ENCODE measurements at regions of chr11 and their contacts with region 1.

Region 1: GRCh38 chr11:133082851-133083488 is 449.3 kb downstream of the OPCML start:
- DNase-seq: peak; percentile 86
- ATAC-seq: peak; percentile 78
- H3K4me3 Mint-ChIP-seq: peak overlapping the region; percentile 71
- H3K27ac Mint-ChIP-seq: no peak overlapping the region
- H3K4me1 Mint-ChIP-seq: peaks cover 31% of the 10 kb centered on the region
- H3K27me3 Mint-ChIP-seq: peaks cover 22% of the 10 kb centered on the region
- CTCF ChIP-seq: peak; percentile 98

Region 2: GRCh38 chr11:132831272-132831671 is 251.7 kb before region 1 on chr11:
- CTCF ChIA-PET with region 1: no interaction called
- POLR2A ChIA-PET with region 1: no interaction called
- DNase-seq: no peak
- ATAC-seq: no peak
- H3K4me3 Mint-ChIP-seq: no peak overlapping the region
- H3K27ac Mint-ChIP-seq: no peak overlapping the region
- H3K4me1 Mint-ChIP-seq: no peaks in the 10 kb centered on the region
- H3K27me3 Mint-ChIP-seq: no peaks in the 10 kb centered on the region
- CTCF ChIP-seq: no peak

Region 3: DNA sequence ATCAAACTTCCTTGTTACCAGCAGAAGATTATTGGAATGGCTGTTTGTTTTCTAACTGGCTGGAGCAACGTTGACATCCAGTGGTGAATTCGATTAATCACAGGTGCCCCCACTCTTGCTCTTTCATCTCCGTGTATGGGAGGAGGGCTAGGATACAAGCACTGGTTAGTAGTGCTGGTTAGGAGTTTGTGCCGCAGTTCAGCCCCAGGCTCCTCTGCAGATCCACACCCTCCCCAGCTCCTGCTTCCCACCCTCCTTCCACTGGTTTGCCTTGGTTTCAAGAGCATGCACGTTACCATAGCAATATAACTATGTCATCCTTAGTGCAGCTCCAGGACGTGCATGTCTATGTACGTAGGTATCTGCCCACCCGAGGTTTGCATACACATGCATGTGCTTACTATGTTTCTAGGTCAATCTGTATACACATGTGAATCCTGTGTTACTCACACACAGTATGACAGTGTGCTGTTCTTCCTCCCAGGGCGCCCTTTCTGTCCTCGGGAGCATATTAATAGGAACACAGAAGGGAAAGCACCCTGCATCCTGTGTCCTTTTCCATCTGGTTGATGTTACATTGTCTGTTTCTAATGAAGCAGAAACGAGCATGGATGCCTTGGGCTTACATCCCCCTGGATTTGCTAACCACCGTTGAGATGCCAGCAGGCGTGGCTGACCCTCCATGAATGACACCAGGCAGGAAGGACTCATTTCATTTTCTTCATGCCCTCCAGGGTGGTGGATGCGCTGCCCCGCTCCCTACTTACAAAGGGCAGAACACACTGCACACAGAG is 89.9 kb before region 1 on chr11:
- CTCF ChIA-PET with region 1: no interaction called
- POLR2A ChIA-PET with region 1: no interaction called
- DNase-seq: no peak
- ATAC-seq: peak; percentile 78
- H3K4me3 Mint-ChIP-seq: peak overlapping the region; percentile 63
- H3K27ac Mint-ChIP-seq: no peak overlapping the region
- H3K4me1 Mint-ChIP-seq: peaks cover 17% of the 10 kb centered on the region
- H3K27me3 Mint-ChIP-seq: peaks cover 55% of the 10 kb centered on the region
- CTCF ChIP-seq: no peak

Region 4: DNA sequence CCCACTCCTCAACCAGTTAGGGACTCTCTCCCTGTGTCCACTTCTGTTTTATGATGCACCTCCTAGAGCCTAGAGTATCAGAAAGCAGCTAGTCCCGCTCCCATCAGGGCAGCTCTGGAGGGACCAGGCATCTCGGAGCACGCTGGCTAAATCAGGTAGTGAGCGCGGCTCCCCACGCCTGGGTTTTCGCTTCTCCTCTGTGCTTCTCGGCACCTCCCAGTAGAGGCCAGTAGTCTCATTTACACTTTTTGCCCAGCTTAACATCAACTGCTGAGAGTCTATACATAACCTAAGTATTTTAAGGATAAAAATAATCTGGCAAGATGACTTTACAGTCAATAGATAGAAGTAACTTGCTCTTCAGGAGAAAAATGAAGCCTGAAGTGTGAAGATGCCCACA is 24.5 kb before region 1 on chr11:
- CTCF ChIA-PET with region 1: interaction called, 17 read pairs
- POLR2A ChIA-PET with region 1: no interaction called
- DNase-seq: peak; percentile 35
- ATAC-seq: peak; percentile 93
- H3K4me3 Mint-ChIP-seq: no peak overlapping the region
- H3K27ac Mint-ChIP-seq: no peak overlapping the region
- H3K4me1 Mint-ChIP-seq: peaks cover under 1% of the 10 kb centered on the region; the same call in 1 of the 2 replicates
- H3K27me3 Mint-ChIP-seq: peaks cover 8% of the 10 kb centered on the region
- CTCF ChIP-seq: no peak

Region 5: DNA sequence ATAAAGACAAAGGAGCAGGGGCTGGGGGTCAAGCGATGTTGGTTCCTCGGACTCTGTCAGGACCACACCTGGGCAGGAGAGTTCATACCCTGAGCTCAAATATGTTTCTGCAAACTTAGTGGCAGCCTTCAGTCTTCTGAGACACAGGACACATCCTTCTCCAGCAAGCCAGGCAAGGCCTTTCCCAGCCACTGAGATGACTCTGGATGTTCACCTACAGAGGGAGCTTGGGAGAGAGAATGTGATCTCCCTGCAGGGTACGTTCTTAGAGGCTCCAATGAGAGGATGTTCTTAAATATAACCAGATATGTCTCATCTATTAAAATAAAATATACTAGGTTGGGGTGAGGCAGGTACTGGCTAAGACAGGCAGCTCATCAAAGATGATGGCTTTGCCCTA is 12.2 kb before region 1 on chr11:
- CTCF ChIA-PET with region 1: interaction called, 23 read pairs
- POLR2A ChIA-PET with region 1: no interaction called
- DNase-seq: no peak
- ATAC-seq: peak; percentile 70
- H3K4me3 Mint-ChIP-seq: peak overlapping the region; percentile 15; the same call in 1 of the 2 replicates
- H3K27ac Mint-ChIP-seq: no peak overlapping the region
- H3K4me1 Mint-ChIP-seq: peaks cover 37% of the 10 kb centered on the region
- H3K27me3 Mint-ChIP-seq: no peaks in the 10 kb centered on the region; the same call in 1 of the 2 replicates
- CTCF ChIP-seq: no peak

Region 6: GRCh38 chr11:133156986-133157745 is 74.2 kb after region 1 on chr11:
- CTCF ChIA-PET with region 1: interaction called, 46 read pairs
- POLR2A ChIA-PET with region 1: no interaction called
- DNase-seq: peak; percentile 62
- ATAC-seq: peak; percentile 78; the same call in 1 of the 2 replicates
- H3K4me3 Mint-ChIP-seq: no peak overlapping the region
- H3K27ac Mint-ChIP-seq: no peak overlapping the region
- H3K4me1 Mint-ChIP-seq: peaks cover 20% of the 10 kb centered on the region
- H3K27me3 Mint-ChIP-seq: no peaks in the 10 kb centered on the region; the same call in 1 of the 2 replicates
- CTCF ChIP-seq: no peak

Region 7: DNA sequence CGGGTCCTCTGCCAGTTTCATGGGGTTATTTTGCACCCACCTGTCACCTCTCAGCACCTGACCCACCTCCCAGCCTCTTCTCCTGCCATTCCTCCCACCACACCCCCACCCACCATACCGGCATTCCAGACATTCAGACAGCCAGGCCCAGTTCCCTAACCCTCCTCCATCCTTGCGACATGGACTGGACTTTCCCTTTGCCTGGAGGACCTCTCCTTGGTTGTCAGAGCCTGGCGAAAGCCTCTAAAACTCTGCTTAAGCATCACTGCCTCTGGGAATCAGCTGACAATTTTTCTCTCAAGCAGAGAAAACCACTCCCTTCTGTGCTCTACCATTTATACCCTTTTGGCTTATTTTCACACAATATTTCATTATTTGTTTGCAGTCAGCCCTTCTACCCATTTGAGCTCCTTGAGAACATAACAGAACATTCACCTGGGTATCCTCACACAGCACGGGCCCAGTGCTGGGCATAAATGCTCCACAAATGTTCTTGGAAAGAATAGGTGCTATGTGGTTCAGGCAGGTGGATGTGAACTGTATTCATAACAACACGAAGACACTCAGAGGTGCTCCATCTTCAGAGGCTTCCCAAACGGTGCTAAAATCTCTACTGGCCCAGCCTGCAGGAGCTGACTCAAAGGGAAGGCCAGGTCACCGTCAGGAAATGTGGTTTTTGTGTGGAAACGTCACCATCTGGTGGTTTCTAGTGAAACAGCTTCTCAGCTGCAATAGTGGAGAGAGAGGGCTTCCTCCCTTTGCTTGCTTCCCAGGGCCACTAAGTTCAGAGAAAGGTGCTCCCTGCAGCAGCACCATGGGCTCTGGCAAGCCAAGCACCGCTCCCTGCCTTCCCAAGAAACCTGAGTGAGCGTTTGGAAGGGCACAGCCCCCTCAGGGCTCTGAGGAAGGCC is 752.0 kb after region 1 on chr11:
- CTCF ChIA-PET with region 1: interaction called, 68 read pairs
- POLR2A ChIA-PET with region 1: interaction called, 4 read pairs
- DNase-seq: peak; percentile 72
- ATAC-seq: peak; percentile 84
- H3K4me3 Mint-ChIP-seq: no peak overlapping the region
- H3K27ac Mint-ChIP-seq: 0 out of 2 replicates have a peak overlapping the region, but pooled peaks have one; percentile 0
- H3K4me1 Mint-ChIP-seq: peaks cover 19% of the 10 kb centered on the region
- H3K27me3 Mint-ChIP-seq: no peaks in the 10 kb centered on the region; the same call in 1 of the 2 replicates
- CTCF ChIP-seq: peak; percentile 60

Measured in WTC11 (cell line).